AG04450 (cell line): ENCODE measurements at regions of chr11 and their contacts with region 1.

Region 1: DNA sequence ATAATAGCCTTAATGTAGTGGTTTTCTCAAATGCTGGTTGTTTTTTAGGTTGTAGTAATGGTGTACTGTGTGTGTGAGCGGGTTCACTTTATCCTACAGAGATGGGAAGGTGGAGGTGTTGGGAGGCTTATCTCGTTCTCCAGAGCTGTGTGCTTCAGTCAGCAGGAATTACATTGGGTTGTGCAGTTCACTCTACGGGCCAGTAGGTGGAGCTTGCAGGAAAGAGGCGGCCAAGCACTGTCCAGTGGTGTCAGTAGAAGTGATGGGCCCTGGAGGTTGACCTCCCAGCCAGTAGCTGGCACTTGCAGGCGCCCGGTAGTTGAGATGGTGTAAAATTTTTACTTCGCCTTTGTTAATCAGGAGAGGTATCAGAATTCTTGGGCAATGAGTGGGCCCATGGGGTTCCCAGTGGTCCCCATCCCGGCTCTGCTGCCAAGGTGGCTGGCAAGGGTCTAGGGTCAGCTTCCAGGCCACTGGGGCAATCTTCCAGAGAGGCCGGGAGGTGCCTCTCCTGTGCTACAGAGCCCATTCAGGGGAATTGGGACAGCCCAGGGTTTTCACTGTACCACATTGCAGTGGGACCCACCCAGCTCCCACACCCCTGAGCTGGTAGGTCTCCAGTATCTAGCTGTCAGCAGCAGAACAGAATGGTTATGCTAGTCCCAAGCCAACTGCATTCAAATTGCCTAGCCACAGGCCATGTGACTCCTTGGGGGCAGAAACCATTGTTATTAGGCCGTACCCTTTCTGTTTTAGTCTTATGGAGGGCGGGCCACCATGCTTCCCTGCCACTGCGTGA is 43.9 kb downstream of the BIRC2 start:
- DNase-seq: peak; percentile 21
- H3K4me3 ChIP-seq: no peak overlapping the region
- H3K27ac ChIP-seq: no peak overlapping the region
- H3K27me3 ChIP-seq: no peaks in the 10 kb centered on the region
- CTCF ChIP-seq: peak; percentile 91

Region 2: DNA sequence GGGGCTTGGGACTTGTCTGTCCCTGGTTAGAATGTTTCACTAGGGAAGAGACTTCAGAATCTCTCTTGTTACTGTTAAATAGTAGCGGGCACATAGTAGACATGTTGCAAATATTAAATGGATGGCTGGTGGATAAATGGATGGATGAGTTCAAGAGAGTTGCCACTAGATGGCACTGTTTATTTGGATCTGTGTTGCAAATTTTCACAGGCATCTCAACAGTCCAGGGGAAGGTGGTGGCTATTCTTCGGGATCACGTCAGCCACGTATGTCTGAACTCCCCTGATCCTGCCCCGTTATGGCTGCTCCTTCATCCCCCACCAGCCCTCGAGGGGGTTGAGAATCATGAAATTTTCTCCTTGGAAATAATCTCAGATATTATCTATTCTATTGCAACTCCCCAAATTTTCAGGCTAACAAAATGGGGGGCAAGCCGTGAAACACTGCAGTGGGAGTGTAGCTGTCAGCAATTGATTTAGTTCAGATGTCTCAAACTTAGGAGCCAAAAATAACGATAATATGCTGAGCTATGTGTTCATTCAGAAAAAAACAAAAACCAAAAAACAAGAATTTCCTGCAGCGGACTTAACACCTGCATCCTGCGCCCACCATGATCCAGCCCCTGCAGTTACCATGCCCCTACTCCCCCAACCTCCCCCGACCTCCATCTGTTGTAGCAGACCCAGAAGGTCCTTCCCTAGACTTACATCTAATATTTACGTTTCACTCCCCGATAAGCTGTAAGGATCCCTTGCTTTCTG is 102.7 kb before region 1 on chr11:
- CTCF ChIA-PET with region 1: interaction called, 10 read pairs
- POLR2A ChIA-PET with region 1: no interaction called
- DNase-seq: peak; percentile 55
- H3K4me3 ChIP-seq: peak overlapping the region; percentile 38
- H3K27ac ChIP-seq: no peak overlapping the region
- H3K27me3 ChIP-seq: no peaks in the 10 kb centered on the region
- CTCF ChIP-seq: peak; percentile 72

Region 3: GRCh38 chr11:102375720-102376399 is 15.0 kb before region 1 on chr11:
- CTCF ChIA-PET with region 1: interaction called, 33 read pairs
- POLR2A ChIA-PET with region 1: no interaction called
- DNase-seq: no peak
- H3K4me3 ChIP-seq: no peak overlapping the region
- H3K27ac ChIP-seq: no peak overlapping the region
- H3K27me3 ChIP-seq: no peaks in the 10 kb centered on the region
- CTCF ChIP-seq: no peak

Region 4: DNA sequence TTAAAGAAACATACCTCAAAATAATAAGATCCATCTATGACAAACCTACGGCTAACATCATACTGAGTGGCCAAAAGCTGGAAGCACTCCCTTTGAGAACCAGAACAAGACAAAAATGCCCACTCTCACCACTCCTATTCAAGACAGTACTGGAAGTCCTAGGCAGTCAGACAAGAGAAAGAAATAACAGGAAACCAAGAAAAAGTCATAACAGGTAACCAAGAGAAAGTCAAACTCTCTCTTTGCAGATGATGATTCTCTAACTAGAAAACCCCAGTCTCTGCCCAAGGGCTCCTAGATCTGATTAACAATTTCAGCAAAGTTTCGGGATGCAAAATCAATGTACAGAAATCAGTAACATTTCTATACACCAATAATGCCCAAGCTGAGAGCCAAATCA is 26.1 kb after region 1 on chr11:
- CTCF ChIA-PET with region 1: interaction called, 10 read pairs
- POLR2A ChIA-PET with region 1: no interaction called
- DNase-seq: no peak
- H3K4me3 ChIP-seq: no peak overlapping the region
- H3K27ac ChIP-seq: no peak overlapping the region
- H3K27me3 ChIP-seq: no peaks in the 10 kb centered on the region
- CTCF ChIP-seq: no peak

Region 5: DNA sequence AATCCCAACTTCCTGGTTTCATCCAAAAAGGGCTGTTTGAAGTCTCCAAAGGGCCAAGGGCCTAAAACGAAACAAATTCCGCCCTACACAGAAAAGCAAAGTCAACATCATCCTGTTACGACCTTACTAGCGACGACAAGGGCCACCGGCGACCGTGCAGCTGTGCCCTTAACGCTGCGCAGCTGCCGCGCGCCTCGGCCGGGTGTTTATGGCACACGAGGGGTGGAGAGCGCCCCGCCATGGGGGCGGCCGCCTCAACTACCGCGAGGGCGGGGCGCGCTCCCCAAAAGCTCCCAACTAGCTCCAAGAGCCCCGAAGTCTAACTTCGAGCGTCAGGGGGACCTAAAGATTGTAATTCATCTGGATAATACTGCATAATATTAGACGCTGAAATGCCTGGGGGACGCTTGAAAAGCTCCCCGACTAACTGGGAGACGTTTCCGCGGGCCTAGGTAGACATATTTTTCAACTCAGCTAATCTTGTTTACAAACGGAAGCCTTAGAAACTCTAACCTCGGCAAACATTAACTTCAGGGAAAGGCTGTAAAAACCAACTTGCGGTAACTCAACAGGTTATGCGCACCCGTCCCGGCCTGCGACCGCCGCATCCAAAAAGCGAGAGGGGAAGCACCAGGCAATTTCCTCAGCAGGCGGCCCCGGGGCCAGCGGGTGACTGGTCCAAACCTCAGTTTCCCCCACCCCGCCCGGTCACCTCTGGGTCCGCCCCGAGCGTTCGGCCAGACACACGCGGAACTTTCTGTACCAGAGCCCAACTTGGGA is 61.0 kb after region 1 on chr11:
- CTCF ChIA-PET with region 1: interaction called, 3 read pairs
- POLR2A ChIA-PET with region 1: interaction called, 11 read pairs
- DNase-seq: no peak
- H3K4me3 ChIP-seq: peak overlapping the region; percentile 89
- H3K27ac ChIP-seq: peak overlapping the region; percentile 48
- H3K27me3 ChIP-seq: no peaks in the 10 kb centered on the region
- CTCF ChIP-seq: 0 out of 2 replicates have a peak, but pooled peaks have one; percentile 7

Region 6: GRCh38 chr11:102495161-102496042 is 104.5 kb after region 1 on chr11:
- CTCF ChIA-PET with region 1: interaction called, 44 read pairs
- POLR2A ChIA-PET with region 1: no interaction called
- DNase-seq: peak; percentile 75
- H3K4me3 ChIP-seq: no peak overlapping the region
- H3K27ac ChIP-seq: no peak overlapping the region
- H3K27me3 ChIP-seq: peaks cover 3% of the 10 kb centered on the region
- CTCF ChIP-seq: peak; percentile 62

Region 7: GRCh38 chr11:102666331-102666957 is 275.6 kb after region 1 on chr11:
- CTCF ChIA-PET with region 1: interaction called, 37 read pairs
- POLR2A ChIA-PET with region 1: no interaction called
- DNase-seq: peak; percentile 13
- H3K4me3 ChIP-seq: no peak overlapping the region
- H3K27ac ChIP-seq: no peak overlapping the region
- H3K27me3 ChIP-seq: no peaks in the 10 kb centered on the region
- CTCF ChIP-seq: peak; percentile 96